GM13976 (cell line): ENCODE measurements at regions of chr12 and their contacts with region 1.

Region 1: DNA sequence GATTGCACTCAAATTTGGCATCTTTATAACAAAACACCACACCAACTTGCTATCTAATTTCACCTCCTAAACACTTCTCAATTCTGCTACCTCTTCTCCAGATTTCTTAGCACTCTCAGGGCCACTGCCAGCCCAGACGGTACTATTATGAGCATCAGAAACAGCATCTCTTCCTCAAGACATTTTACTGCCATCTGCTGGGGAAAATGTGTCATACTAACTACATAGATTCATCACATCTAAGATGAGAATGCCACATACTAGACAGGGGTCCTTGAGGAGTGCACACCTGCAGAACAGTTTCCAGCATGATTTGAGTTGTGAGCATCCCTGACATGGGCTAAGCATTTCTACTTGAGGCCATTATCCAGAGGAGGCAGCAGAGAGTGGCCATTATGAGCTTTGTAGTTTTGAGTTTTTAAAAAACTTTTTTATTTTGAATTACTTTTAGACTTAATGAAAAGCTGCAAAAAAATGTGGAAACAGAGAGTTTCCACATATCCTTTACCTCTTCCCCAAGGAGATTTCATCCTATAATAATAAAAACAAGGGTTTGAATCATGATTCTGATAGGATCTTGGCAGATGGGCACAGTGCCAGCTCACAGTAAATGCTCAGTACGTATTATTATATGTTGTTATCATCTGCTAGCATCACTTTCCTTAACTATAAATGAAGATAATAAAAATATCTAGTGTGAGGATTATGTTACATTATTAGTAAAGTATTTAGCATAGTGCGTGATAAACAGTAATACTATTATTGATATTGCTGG is 15.2 kb upstream of the GRIP1 start:
- DNase-seq: peak; percentile 32
- CTCF ChIP-seq: peak; percentile 52

Region 2: GRCh38 chr12:66130277-66131066 is 563.6 kb before region 1 on chr12 and contains the start of gene LLPH:
- in situ Hi-C with region 1: loop called (anchors 25 kb)
- DNase-seq: peak; percentile 93
- CTCF ChIP-seq: no peak

Region 3: DNA sequence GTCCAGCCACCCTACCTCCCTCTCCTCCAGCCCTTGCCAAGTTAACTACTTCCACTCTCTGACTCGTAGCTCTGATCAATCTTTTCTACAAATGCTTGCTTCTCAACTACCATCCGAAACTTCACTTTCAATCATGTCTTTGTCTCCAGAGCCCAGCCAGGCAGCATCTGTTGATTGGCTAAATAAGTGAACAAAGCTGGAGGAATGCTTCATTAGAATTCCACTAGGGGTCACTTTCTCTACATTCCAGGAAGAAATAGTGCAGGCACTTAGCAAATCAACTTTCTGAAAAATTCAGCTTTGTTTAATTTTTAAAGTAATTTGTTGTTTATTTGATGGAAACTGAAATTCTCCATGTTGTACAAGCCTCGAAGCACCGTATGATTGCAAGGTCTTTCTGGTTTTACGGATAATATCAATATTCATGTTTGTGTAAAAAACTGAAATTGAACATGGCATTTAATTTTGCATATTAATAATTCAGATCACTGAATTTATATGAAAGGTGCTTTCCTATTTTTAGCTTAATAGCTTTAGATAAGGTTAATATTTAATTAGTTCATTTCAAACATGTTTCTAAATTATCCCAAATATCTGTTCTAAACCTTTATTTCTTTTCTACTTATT is 424.2 kb before region 1 on chr12:
- in situ Hi-C with region 1: loop called (anchors 10 kb)
- DNase-seq: peak; percentile 40
- CTCF ChIP-seq: peak; percentile 33